ENCODE measurements at regions of chr10 and their contacts with region 1.

Region 1: DNA sequence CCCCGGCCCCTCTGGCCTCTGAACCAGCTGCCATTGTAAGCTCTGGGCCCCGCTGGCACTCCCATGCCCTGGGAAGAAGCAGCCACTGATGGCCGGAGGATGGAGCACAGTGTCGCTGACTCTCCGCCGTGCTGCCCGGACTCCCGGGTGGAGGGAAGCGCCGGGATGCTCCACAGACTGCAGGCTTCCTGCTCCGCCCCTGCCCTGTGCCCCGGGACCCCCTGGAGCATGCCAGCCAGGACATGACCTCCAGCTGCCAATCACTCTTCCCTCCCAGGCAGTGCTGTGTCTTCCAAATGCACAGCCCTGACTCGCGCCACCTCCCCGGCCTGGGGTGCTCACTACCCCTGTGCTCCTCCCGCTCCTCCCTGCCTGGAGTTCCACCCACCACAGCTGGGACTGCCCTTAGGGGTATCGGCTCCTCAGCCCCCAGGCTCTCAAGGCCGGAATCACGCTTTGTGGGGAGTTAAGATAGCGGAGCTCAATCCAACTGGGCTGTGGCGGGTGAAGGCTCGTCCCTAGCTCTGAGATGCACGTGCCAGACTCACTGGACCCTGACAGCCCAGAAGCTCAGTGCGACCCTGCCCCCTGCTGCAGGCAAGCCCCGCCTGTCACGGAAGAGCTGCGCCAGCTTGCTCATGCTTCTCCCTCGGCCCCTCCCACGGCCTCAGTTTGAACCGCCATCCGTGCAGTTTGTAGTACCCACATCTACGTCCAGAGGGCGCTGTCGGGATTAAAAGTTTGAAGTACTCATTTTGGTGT is 142.3 kb upstream of the TCERG1L start:
- DNase-seq: no peak
- ATAC-seq: peak; percentile 23; the same call in 1 of the 3 replicates
- H3K4me3 ChIP-seq: no peak overlapping the region
- H3K27ac ChIP-seq: no peak overlapping the region
- H3K4me1 ChIP-seq: no peaks in the 10 kb centered on the region
- H3K27me3 ChIP-seq: no peaks in the 10 kb centered on the region; a peak in 1 of 4 replicates
- CTCF ChIP-seq: peak; percentile 41 to 65 (median 65); a peak in 5 of 6 replicates
- EP300 ChIP-seq: no peak
- POLR2A ChIP-seq: no peak
- RAD21 ChIP-seq: peak; percentile 52

Region 2: GRCh38 chr10:131786756-131787605 is 333.2 kb after region 1 on chr10:
- CTCF ChIA-PET with region 1: interaction called, 5 read pairs
- POLR2A ChIA-PET with region 1: no interaction called
- RAD21 ChIA-PET with region 1: no interaction called
- SMC1A ChIA-PET with region 1: interaction called, 13 read pairs
- in situ Hi-C with region 1: no loop called
- intact Hi-C with region 1: loop called (anchors 2 kb)
- DNase-seq: peak; percentile 2
- ATAC-seq: no peak
- H3K4me3 ChIP-seq: no peak overlapping the region
- H3K27ac ChIP-seq: no peak overlapping the region
- H3K4me1 ChIP-seq: no peaks in the 10 kb centered on the region
- H3K27me3 ChIP-seq: no peaks in the 10 kb centered on the region
- CTCF ChIP-seq: peak; percentile 56 to 62 (median 60); a peak in 5 of 6 replicates
- EP300 ChIP-seq: no peak
- POLR2A ChIP-seq: no peak
- RAD21 ChIP-seq: peak; percentile 78